IMR-90 (cell line): ENCODE measurements at regions of chr18 and their contacts with region 1.

Region 1: GRCh38 chr18:31162419-31162793 is 250 bp downstream of the DSC1 start:
- DNase-seq: no peak
- ATAC-seq: no peak
- H3K4me3 ChIP-seq: no peak overlapping the region
- H3K27ac ChIP-seq: no peak overlapping the region
- H3K4me1 ChIP-seq: no peaks in the 10 kb centered on the region
- H3K27me3 ChIP-seq: no peaks in the 10 kb centered on the region
- CTCF ChIP-seq: no peak
- POLR2A ChIP-seq: no peak
- RAD21 ChIP-seq: no peak

Region 2: DNA sequence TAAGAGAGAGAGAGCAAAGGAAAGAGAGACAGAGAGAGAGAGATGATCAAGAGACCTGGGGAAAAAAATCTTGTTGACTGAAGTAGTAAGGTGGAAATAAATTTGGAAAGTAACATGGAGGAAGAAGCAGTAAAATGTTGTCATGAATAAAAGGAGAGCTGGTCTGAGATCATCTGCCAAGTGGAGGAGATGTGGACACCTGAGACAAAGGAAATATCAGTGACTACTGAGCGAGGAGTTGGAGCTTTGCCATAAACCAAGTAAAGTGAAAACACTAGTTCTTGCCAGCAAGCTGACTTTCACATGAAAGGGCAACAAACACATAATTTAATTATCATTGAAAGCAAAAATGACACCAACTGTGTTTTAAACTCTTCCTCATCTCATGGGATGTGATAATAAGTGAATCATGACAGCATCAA is 106.6 kb after region 1 on chr18:
- CTCF ChIA-PET with region 1: no interaction called
- POLR2A ChIA-PET with region 1: no interaction called
- dilution Hi-C with region 1: no loop called
- in situ Hi-C with region 1: no loop called
- intact Hi-C with region 1: loop called (anchors 1 kb)
- DNase-seq: no peak
- ATAC-seq: no peak
- H3K4me3 ChIP-seq: no peak overlapping the region
- H3K27ac ChIP-seq: no peak overlapping the region
- H3K4me1 ChIP-seq: no peaks in the 10 kb centered on the region
- H3K27me3 ChIP-seq: no peaks in the 10 kb centered on the region
- CTCF ChIP-seq: no peak
- POLR2A ChIP-seq: no peak
- RAD21 ChIP-seq: no peak

Region 3: DNA sequence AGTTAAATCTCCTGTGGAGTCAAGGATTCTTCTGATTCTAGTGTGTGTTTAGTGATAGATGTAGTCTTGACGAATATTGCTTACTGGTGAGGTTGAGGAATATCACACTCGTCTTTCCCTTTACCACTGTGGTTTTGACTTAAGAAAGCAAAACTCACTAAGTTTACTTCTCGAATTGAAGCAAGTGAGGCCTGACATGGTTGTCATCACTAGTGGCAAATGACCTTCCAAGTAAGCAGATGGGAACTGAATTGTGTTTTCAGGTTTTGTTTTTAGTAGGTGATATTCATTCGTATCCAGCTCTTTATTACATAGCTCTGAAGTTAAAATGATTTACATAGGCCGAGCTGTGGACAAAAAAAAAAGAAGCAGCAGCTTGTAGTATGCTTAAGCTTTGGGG is 193.6 kb after region 1 on chr18:
- CTCF ChIA-PET with region 1: no interaction called
- POLR2A ChIA-PET with region 1: no interaction called
- dilution Hi-C with region 1: no loop called
- in situ Hi-C with region 1: no loop called
- intact Hi-C with region 1: no loop called
- DNase-seq: no peak
- ATAC-seq: no peak
- H3K4me3 ChIP-seq: no peak overlapping the region
- H3K27ac ChIP-seq: no peak overlapping the region
- H3K4me1 ChIP-seq: no peaks in the 10 kb centered on the region
- H3K27me3 ChIP-seq: no peaks in the 10 kb centered on the region
- CTCF ChIP-seq: no peak
- POLR2A ChIP-seq: no peak
- RAD21 ChIP-seq: no peak

Region 4: DNA sequence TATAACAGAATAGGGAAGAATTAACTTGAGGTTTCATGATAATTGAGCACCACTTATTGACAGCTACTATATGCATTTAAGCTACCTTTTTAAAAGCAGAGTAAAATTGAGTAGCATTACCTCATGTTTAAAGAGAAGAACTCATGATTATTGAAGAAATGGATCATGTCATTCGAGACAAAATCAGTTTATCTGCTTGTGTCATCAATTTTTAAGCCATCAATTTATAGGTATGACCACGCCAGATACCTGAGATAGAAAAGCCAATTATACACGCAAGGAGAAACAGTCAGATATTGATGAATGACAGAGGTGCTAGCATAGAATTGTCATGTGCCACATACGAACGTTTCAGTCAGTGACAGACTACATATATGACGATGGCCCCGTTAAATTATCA is 364.0 kb after region 1 on chr18:
- CTCF ChIA-PET with region 1: no interaction called
- POLR2A ChIA-PET with region 1: no interaction called
- dilution Hi-C with region 1: no loop called
- in situ Hi-C with region 1: no loop called
- intact Hi-C with region 1: no loop called
- DNase-seq: no peak
- ATAC-seq: no peak
- H3K4me3 ChIP-seq: no peak overlapping the region
- H3K27ac ChIP-seq: no peak overlapping the region
- H3K4me1 ChIP-seq: no peaks in the 10 kb centered on the region
- H3K27me3 ChIP-seq: no peaks in the 10 kb centered on the region
- CTCF ChIP-seq: no peak
- POLR2A ChIP-seq: no peak
- RAD21 ChIP-seq: no peak